CD14-positive monocyte (primary cell): ENCODE measurements at regions of chr10 and their contacts with region 1.

Region 1: GRCh38 chr10:7872041-7872442 is 53.7 kb downstream of the TAF3 start:
- DNase-seq: peak in 2 of 3 donors; percentile 14 to 37
- H3K4me3 ChIP-seq: peak overlapping the region in 1 of 3 experiments; percentile 25
- H3K4me3 Mint-ChIP-seq: peak overlapping the region; percentile 54 to 82
- H3K27ac ChIP-seq: no peak overlapping the region
- H3K27ac Mint-ChIP-seq: no peak overlapping the region
- H3K4me1 ChIP-seq: no peaks in the 10 kb centered on the region
- H3K4me1 Mint-ChIP-seq: peaks cover 3% of the 10 kb centered on the region
- H3K27me3 ChIP-seq: no peaks in the 10 kb centered on the region
- H3K27me3 Mint-ChIP-seq: peaks cover 0 to 2% (median 0%) of the 10 kb centered on the region in 3 donors
- CTCF ChIP-seq: peak; percentile 86

Region 2: DNA sequence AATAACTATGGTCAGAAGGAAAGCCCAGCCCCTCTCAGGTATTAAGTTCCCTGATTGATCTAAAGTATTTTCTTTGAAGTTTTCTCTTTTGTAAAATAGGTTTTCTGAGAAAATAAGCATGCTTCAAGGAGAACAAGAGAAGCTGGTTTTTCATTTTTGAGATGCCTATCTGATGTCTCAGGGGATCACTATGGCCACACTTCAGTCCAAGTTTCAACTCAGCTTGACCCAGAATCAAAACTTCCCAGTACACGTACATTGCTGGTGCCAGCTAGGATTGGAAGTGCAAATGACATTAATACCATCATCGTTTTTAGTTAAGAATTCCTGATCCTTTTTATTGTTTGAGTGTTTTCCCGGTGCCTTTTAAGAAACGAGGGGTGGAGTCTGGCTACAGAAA is 212.5 kb before region 1 on chr10:
- intact Hi-C with region 1: no loop called
- DNase-seq: no peak
- H3K4me3 ChIP-seq: no peak overlapping the region
- H3K4me3 Mint-ChIP-seq: no peak overlapping the region
- H3K27ac ChIP-seq: no peak overlapping the region
- H3K27ac Mint-ChIP-seq: no peak overlapping the region
- H3K4me1 ChIP-seq: no peaks in the 10 kb centered on the region
- H3K4me1 Mint-ChIP-seq: no peaks in the 10 kb centered on the region
- H3K27me3 ChIP-seq: peaks cover 15 to 36% of the 10 kb centered on the region in 2 donors
- H3K27me3 Mint-ChIP-seq: peaks cover 6 to 41% (median 30%) of the 10 kb centered on the region in 3 donors
- CTCF ChIP-seq: no peak

Region 3: GRCh38 chr10:7908541-7909210 is 36.6 kb after region 1 on chr10:
- intact Hi-C with region 1: no loop called
- DNase-seq: no peak
- H3K4me3 ChIP-seq: no peak overlapping the region
- H3K4me3 Mint-ChIP-seq: no peak overlapping the region
- H3K27ac ChIP-seq: no peak overlapping the region
- H3K27ac Mint-ChIP-seq: no peak overlapping the region
- H3K4me1 ChIP-seq: no peaks in the 10 kb centered on the region
- H3K4me1 Mint-ChIP-seq: no peaks in the 10 kb centered on the region
- H3K27me3 ChIP-seq: no peaks in the 10 kb centered on the region
- H3K27me3 Mint-ChIP-seq: peaks cover 0 to 2% (median 1%) of the 10 kb centered on the region in 3 donors
- CTCF ChIP-seq: no peak

Region 4: GRCh38 chr10:9209105-9209798 is 1337.2 kb after region 1 on chr10:
- intact Hi-C with region 1: loop called (anchors 5 kb)
- DNase-seq: peak; percentile 8 to 14 (median 14)
- H3K4me3 ChIP-seq: no peak overlapping the region
- H3K4me3 Mint-ChIP-seq: no peak overlapping the region
- H3K27ac ChIP-seq: no peak overlapping the region
- H3K27ac Mint-ChIP-seq: no peak overlapping the region
- H3K4me1 ChIP-seq: no peaks in the 10 kb centered on the region
- H3K4me1 Mint-ChIP-seq: no peaks in the 10 kb centered on the region
- H3K27me3 ChIP-seq: no peaks in the 10 kb centered on the region
- H3K27me3 Mint-ChIP-seq: peaks cover 3 to 4% (median 4%) of the 10 kb centered on the region in 3 donors
- CTCF ChIP-seq: peak; percentile 96